ENCODE measurements at regions of chr5 and their contacts with region 1.

Region 1: GRCh38 chr5:43105369-43106289 is 15.1 kb upstream of the ZNF131 start:
- DNase-seq: peak; percentile 77
- H3K4me3 ChIP-seq: peak overlapping the region; percentile 55
- CTCF ChIP-seq: peak; percentile 100

Region 2: GRCh38 chr5:43066799-43067741 is 38.6 kb before region 1 on chr5:
- CTCF ChIA-PET with region 1: interaction called, 10 read pairs
- POLR2A ChIA-PET with region 1: no interaction called
- DNase-seq: no peak
- H3K4me3 ChIP-seq: peak overlapping the region; percentile 86
- CTCF ChIP-seq: no peak

Region 3: GRCh38 chr5:43078986-43079355 is 26.7 kb before region 1 on chr5:
- CTCF ChIA-PET with region 1: interaction called, 30 read pairs
- POLR2A ChIA-PET with region 1: no interaction called
- DNase-seq: no peak
- H3K4me3 ChIP-seq: no peak overlapping the region
- CTCF ChIP-seq: no peak

Region 4: DNA sequence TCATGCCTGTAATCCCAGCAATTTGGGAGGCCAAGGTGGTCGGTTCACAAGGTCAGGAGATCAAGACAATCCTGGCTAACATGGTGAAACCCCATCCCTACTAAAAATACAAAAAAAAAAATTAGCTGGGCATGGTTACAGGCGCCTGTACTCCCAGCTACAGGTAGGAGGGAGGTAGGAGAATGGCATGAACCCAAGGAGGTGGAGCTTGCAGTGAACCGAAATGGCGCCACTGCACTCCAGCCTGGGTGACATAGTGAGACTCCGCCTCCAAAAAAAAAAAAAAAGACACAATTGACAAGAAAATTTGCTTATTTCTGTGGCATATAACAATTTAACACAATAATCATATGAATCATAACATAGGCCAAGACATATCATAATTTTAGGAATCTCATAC is 20.2 kb before region 1 on chr5:
- CTCF ChIA-PET with region 1: interaction called, 122 read pairs
- POLR2A ChIA-PET with region 1: no interaction called
- DNase-seq: no peak
- H3K4me3 ChIP-seq: no peak overlapping the region
- CTCF ChIP-seq: no peak

Region 5: DNA sequence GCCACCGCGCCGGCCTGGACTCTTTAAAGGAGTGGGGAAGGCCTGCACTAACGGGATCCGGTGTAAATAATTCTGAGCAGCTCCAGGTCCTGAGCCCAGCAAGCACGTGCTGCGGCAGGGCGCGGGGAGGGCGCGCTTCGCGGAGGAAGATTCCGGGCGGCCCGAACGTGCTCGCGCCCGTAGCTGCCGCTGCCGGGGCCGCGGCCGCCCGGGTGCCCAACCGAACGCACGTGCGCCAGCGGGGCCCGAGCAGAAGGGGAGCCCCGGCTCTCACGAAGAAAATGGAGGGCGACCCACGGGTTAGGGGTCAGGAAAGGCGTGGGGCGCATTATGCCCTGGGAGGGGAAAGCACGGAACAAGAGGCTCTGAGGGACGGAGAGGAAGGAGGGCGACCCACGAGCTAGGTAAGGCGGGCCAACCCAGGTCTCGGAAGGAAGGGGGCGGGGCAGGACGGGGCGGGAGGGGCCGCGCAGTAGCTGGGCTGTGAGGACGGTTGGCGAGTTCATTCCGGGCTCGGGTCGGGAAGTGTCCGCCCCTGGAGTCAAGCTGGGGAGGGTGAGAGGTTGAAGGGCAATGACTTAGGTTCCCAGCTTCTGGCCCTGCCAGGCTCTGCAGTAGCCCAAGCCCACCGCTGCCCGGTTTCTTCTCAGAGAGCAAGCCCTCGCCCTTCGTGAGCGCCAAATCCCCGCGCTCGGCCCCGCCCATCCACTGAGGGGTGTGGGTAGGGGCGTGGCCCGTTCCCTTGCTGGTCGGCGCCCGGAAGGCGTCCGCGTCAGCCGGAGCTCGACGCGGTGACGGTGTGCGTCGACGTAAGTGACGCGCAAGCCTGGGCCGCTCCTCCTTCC is 15.3 kb after region 1 on chr5 and contains the start of gene ZNF131:
- CTCF ChIA-PET with region 1: interaction called, 138 read pairs
- POLR2A ChIA-PET with region 1: interaction called, 4 read pairs
- DNase-seq: peak; percentile 78
- H3K4me3 ChIP-seq: peak within 1 kb of the TSS; percentile 79
- CTCF ChIP-seq: no peak

Region 6: GRCh38 chr5:43305948-43306565 is 200.4 kb after region 1 on chr5:
- CTCF ChIA-PET with region 1: interaction called, 26 read pairs
- POLR2A ChIA-PET with region 1: no interaction called
- DNase-seq: peak; percentile 31
- H3K4me3 ChIP-seq: no peak overlapping the region
- CTCF ChIP-seq: peak; percentile 50

Region 7: GRCh38 chr5:43389679-43390329 is 284.2 kb after region 1 on chr5:
- CTCF ChIA-PET with region 1: interaction called, 35 read pairs
- POLR2A ChIA-PET with region 1: no interaction called
- DNase-seq: peak; percentile 71
- H3K4me3 ChIP-seq: no peak overlapping the region
- CTCF ChIP-seq: peak; percentile 64